ENCODE measurements at regions of chr20 and their contacts with region 1.

Region 1: DNA sequence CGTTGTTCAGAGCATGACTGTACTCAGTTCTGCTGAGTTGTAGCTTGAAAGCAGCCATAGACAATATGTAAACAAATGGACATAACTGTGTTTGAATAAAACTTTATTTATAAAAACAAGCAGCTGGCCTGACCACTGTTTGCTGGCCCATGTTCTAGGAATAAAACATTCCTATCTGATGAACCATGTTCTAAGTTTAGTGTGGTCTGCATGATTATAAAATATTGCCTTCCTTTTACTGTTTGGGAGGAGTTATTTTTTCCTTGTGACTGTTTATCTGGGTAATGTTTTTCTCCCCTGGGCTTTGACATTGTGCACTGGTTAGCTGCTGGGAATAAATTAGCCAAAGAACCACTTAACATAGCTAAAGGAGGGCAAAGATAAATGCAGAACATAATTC is 55.1 kb downstream of the CDS2 start:
- DNase-seq: peak; percentile 80
- ATAC-seq: peak; percentile 43
- H3K4me3 ChIP-seq: no peak overlapping the region
- H3K27ac ChIP-seq: no peak overlapping the region
- H3K4me1 ChIP-seq: peaks cover 10% of the 10 kb centered on the region
- H3K27me3 ChIP-seq: no peaks in the 10 kb centered on the region
- CTCF ChIP-seq: no peak
- POLR2A ChIP-seq: no peak
- RAD21 ChIP-seq: no peak

Region 2: GRCh38 chr20:5141615-5142014 is 40.3 kb before region 1 on chr20:
- CTCF ChIA-PET with region 1: no interaction called
- POLR2A ChIA-PET with region 1: no interaction called
- dilution Hi-C with region 1: no loop called
- in situ Hi-C with region 1: no loop called
- intact Hi-C with region 1: loop called (anchors 5 kb)
- DNase-seq: no peak
- ATAC-seq: no peak
- H3K4me3 ChIP-seq: no peak overlapping the region
- H3K27ac ChIP-seq: no peak overlapping the region
- H3K4me1 ChIP-seq: peaks cover 8% of the 10 kb centered on the region
- H3K27me3 ChIP-seq: no peaks in the 10 kb centered on the region
- CTCF ChIP-seq: no peak
- POLR2A ChIP-seq: no peak
- RAD21 ChIP-seq: no peak

Measured in IMR-90 (cell line).